ENCODE measurements at regions of chr6 and their contacts with region 1.

Region 1: GRCh38 chr6:120410586-120410985 is 923.7 kb downstream of the TBC1D32 start:
- DNase-seq: no peak

Region 2: DNA sequence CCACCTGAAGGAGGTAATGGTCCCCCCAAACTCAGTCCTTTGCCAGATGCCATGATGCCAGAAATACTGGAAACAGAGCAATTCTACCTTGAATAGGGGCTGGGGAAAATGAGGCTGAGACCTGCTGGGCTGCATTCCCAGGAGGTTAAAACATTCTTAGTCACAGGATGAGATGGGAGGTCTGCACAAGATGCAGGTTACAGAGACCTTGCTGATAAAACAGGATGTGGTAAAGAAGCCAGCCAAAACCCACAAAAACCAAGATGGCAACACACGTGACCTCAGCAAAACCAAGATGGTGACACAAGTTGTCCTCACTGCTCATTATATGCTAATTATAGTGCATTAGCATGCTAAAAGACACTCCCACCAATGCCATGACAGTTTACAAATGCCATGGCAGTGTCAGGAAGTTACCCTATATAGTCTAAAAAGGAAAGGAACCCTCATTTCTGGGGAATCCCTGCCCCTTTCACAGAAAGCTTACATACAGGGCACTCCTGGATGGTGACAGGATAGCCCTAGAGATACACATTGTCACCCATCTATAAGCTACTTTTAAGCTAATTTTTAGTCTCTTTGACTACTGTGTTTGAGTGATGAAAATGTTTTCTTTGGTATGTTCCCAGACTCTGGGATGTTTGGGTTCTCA is 56.0 kb before region 1 on chr6:
- intact Hi-C with region 1: loop called in 1 of 2 experiments (anchors 2 kb)
- DNase-seq: no peak

Region 3: DNA sequence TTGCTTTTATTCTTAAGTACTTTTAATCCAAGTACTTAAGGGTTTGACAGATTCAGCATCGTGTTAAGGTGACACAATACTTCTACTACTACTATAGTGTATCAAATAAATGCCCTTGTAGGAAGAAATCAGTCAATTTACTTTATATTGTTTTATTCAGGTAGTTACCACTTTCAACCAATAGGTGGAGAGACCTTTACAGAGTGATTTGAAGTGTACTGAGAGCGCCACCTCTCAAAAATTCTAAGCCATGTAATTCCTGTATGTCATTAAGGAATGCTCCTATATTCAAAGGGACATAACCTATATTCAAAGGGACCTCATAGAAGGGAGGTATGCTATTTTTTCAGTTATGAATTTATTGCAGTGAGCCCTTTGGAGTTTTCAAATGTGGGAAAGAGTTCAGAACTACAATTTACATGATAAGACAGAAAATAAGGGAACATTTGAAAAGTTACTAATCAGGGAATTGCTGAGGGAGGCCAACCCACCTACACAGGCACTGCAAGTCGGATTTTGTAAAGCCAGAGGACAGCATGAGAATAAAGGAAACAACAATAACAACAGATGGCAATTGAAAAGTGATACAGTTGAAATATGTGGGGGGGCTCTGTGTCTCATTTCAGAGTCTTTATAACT is 31.9 kb before region 1 on chr6:
- intact Hi-C with region 1: loop called in 1 of 2 experiments (anchors 5 kb)
- DNase-seq: no peak

Region 4: GRCh38 chr6:120471749-120472148 is 61.2 kb after region 1 on chr6:
- intact Hi-C with region 1: no loop called
- DNase-seq: no peak

Region 5: DNA sequence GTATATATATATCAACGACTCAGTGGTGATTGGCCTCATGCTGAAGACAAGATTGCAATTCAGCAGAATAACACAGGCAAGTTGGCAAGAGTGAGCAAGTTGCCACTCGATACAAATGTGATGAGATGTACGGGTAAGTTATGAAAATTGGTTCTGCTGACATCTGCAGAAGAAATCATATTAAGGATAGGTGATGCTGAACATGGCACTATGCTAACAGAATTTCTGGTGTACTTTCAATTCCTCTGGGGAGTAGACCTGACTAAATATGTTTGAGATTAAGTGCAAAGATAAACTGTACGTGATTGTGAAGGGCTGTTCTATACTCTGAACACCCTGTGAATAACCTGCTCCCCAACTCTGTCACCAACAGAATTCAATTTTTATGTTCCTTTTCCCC is 165.5 kb after region 1 on chr6:
- intact Hi-C with region 1: no loop called
- DNase-seq: no peak

Measured in posterior vena cava (tissue), 2 donors.